HCT116 (cell line): ENCODE measurements at regions of chr13 and their contacts with region 1.

Region 1: GRCh38 chr13:20525690-20526544 is at the start of gene CRYL1:
- DNase-seq: no peak
- ATAC-seq: peak; percentile 91
- H3K4me3 ChIP-seq: peak within 1 kb of the TSS; percentile 72 to 86
- H3K27ac ChIP-seq: peak within 1 kb of the TSS; percentile 66
- H3K4me1 ChIP-seq: peaks cover 7 to 21% of the 10 kb centered on the region in 2 experiments
- H3K27me3 ChIP-seq: no peaks in the 10 kb centered on the region
- CTCF ChIP-seq: no peak
- POLR2A ChIP-seq: peak; percentile 63
- RAD21 ChIP-seq: no peak
- total RNA-seq, gene CRYL1: 26.5 TPM

Region 2: GRCh38 chr13:20566898-20567874 is 41.3 kb after region 1 on chr13 and contains the start of gene IFT88:
- CTCF ChIA-PET with region 1: no interaction called
- POLR2A ChIA-PET with region 1: no interaction called
- RAD21 ChIA-PET with region 1: no interaction called
- intact Hi-C with region 1: loop called (anchors 2 kb)
- DNase-seq: peak; percentile 68
- ATAC-seq: peak; percentile 87
- H3K4me3 ChIP-seq: peak within 1 kb of the TSS; percentile 66 to 77
- H3K27ac ChIP-seq: peak within 1 kb of the TSS; percentile 99
- H3K4me1 ChIP-seq: peaks cover 5 to 25% of the 10 kb centered on the region in 2 experiments; a peak in 3 of 4 replicates
- H3K27me3 ChIP-seq: no peaks in the 10 kb centered on the region
- CTCF ChIP-seq: no peak
- POLR2A ChIP-seq: peak; percentile 79
- RAD21 ChIP-seq: no peak
- total RNA-seq, gene IFT88: 13.1 TPM

Region 3: DNA sequence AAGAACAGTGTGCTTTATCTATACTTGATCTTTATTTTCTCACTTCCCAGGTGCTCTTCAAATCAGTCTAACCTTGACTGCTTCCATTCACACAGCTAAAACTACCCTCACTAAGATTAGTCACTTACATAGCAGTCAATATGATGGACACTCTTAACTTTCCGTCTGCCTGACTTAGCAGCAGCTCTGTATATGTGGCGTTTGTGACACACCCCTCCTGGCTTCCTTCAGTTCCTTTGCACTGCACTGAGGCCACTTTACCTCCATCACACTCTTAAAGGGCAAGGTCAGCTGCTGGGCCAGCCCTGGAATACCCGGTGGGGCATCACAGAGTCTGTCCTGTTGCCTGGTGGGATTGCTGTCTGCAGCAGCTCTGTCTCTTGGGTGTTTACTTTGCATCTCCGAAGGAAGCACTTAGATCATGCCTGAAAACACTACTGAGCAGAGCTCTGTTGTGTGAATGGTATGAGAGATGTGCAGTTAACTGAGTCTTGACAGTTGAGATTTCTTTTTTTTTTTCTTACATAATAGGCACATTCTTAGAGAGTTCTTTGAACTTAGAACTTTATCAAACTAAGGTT is 142.0 kb after region 1 on chr13:
- CTCF ChIA-PET with region 1: no interaction called
- POLR2A ChIA-PET with region 1: no interaction called
- RAD21 ChIA-PET with region 1: no interaction called
- intact Hi-C with region 1: no loop called
- DNase-seq: no peak
- ATAC-seq: no peak
- H3K4me3 ChIP-seq: no peak overlapping the region
- H3K27ac ChIP-seq: no peak overlapping the region
- H3K4me1 ChIP-seq: no peaks in the 10 kb centered on the region
- H3K27me3 ChIP-seq: no peaks in the 10 kb centered on the region
- CTCF ChIP-seq: no peak
- POLR2A ChIP-seq: no peak
- RAD21 ChIP-seq: no peak